ENCODE measurements at regions of chr10 and their contacts with region 1.

Region 1: DNA sequence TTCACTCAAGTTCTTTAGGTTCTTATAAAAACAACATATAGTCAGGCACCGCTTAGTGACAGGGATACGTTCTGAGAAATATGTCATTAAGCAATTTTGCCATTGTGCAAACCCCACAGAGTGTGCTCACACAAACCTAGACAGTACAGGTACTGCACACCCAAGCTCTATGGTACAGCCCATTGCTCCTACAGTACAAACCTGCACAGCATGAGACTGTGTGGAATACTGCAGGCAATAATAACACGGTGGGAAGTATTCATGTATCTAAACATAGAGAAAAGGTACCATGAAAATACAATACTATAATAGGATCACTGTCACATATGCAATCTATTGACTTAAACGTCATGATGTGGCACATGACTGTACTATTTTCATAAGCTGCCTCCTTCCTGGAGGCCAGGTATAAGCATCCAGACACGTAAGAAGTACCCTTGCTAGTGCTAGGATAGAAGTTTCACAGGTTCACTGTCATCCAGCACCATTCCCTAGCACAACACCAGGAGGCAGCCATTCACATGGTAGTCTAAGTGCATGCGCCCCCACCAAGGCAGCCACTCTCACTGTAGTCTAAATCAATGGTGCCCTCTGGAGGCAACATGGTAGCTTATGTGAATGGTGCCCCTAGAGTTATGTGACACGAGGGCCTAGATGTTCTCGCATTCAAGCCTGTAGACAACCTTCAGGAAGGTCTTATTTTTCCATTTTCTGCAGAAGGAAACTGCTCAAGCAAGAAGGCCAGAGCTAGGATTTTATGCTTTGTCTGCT is 98.5 kb downstream of the ARHGAP22 start:
- DNase-seq: peak in 1 of 9 donors; percentile 17
- ATAC-seq: peak; percentile 19
- H3K4me3 ChIP-seq: no peak overlapping the region
- H3K4me3 Mint-ChIP-seq: no peak overlapping the region
- H3K27ac ChIP-seq: no peak overlapping the region
- H3K27ac Mint-ChIP-seq: no peak overlapping the region
- H3K4me1 ChIP-seq: no peaks in the 10 kb centered on the region
- H3K4me1 Mint-ChIP-seq: no peaks in the 10 kb centered on the region
- H3K27me3 ChIP-seq: no peaks in the 10 kb centered on the region
- H3K27me3 Mint-ChIP-seq: peaks cover 0 to 9% (median under 1%) of the 10 kb centered on the region in 5 donors

Region 2: DNA sequence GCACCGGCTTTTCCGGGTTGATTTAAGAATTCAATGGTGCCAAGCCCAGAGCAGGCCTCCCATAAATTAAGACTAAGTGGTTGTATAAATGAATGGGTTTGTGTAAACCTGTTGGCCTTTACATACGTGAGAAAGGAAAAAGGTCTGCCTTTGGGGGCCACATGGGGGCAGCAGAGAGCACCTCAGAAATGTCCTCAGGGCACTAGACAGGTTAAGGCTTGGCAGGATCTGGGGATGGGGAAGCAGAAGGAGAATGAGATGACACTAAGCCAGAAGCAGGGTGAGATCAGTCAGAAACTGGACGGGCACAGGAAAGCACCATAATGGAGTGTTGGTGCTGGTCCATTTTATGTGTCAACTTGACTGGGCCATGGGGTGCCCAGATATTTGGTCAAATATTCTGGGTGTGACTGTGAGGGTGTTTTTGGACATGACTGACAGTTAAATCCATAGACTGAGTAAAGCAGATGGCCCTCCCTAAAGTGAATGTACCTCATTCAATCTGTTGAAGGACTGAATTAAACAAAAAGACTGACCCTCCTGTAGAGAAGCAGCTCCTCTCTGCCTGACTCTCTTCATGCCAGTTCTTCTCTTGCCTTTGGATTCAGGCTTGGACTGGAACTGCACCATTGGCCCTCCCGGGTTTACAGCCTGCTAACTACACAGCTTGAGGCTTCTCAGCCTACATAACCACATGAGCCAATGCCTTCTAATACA is 290.7 kb before region 1 on chr10:
- CTCF ChIA-PET with region 1: no interaction called
- POLR2A ChIA-PET with region 1: no interaction called
- intact Hi-C with region 1: loop called in 1 of 2 experiments (anchors 10 kb)
- DNase-seq: peak in 4 of 9 donors; percentile 2 to 37 (median 4)
- ATAC-seq: no peak
- H3K4me3 ChIP-seq: no peak overlapping the region
- H3K4me3 Mint-ChIP-seq: no peak overlapping the region
- H3K27ac ChIP-seq: no peak overlapping the region
- H3K27ac Mint-ChIP-seq: no peak overlapping the region
- H3K4me1 ChIP-seq: no peaks in the 10 kb centered on the region
- H3K4me1 Mint-ChIP-seq: no peaks in the 10 kb centered on the region
- H3K27me3 ChIP-seq: no peaks in the 10 kb centered on the region
- H3K27me3 Mint-ChIP-seq: peaks cover 3 to 22% (median 9%) of the 10 kb centered on the region in 5 donors

Region 3: DNA sequence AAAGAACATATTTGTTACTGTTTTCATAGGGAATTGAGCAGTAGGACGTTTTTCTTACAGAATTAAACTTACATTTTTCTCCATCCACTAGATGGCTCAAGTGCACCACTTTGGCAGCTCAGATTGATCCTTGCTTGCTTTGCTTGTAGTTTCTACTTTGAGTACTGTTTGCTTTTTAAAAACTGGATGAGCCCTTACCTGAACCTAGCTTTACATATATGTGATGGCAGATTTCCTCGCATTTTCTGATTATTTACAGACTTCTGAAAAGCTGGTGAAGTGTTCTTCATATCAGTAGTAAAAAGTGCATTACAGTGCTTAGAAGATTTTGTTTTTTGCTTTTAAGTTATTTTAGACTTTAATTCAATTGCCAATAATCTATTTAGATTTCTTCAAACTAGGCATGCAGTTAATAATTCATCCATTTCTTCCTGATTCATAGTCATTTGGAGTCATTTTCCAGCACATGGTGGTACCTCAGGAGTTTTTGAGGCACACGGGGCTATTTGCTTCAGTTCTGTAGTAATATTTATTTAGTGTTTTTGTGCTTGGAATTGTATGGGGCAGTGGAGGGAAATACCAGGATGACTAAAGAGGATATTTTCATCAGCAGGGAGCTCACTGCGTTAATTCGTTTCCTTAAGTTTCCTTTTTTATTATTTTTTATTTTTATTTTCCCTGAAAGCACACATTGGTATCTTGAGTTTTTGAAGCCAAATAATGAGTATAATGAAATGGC is 142.5 kb before region 1 on chr10:
- CTCF ChIA-PET with region 1: no interaction called
- POLR2A ChIA-PET with region 1: no interaction called
- intact Hi-C with region 1: loop called (anchors 1 kb)
- DNase-seq: peak in 6 of 9 donors; percentile 7 to 45 (median 37)
- ATAC-seq: peak; percentile 51
- H3K4me3 ChIP-seq: no peak overlapping the region
- H3K4me3 Mint-ChIP-seq: no peak overlapping the region
- H3K27ac ChIP-seq: no peak overlapping the region
- H3K27ac Mint-ChIP-seq: no peak overlapping the region
- H3K4me1 ChIP-seq: no peaks in the 10 kb centered on the region
- H3K4me1 Mint-ChIP-seq: peaks cover 4 to 59% (median 49%) of the 10 kb centered on the region in 7 donors
- H3K27me3 ChIP-seq: no peaks in the 10 kb centered on the region
- H3K27me3 Mint-ChIP-seq: no peaks in the 10 kb centered on the region

Measured in naive thymus-derived CD4-positive, alpha-beta T cell (primary cell).